HAP-1 (cell line): ENCODE measurements at regions of chr2 and their contacts with region 1.

Region 1: DNA sequence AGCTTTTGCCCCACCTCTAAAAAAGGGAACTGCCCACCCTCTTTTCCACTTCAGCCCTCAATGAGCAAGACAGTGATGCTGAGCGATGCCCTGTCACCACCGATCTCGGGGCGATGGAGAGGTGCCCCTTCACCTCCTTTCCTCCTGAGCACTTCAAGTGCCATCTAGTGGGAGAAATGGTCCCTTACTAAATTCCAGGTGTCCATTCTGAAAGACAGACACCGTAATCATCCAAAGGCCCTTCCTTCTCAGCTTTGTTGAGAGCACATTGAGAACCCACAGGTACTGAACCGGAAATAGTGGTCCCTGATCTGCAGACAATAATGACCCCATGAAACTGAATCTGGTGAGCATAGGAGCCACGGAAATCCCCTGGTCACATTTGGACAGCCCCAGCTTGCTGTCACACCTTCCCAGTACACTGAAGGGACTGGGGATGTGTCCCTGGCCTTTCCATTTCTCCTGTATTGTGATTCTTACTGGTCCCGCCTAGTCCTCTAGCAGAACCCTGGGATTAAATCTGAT is 38.5 kb downstream of the KCTD18 start:
- DNase-seq: peak; percentile 11 to 25
- H3K4me3 ChIP-seq: no peak overlapping the region
- H3K4me1 ChIP-seq: no peaks in the 10 kb centered on the region
- H3K27me3 ChIP-seq: no peaks in the 10 kb centered on the region

Region 2: DNA sequence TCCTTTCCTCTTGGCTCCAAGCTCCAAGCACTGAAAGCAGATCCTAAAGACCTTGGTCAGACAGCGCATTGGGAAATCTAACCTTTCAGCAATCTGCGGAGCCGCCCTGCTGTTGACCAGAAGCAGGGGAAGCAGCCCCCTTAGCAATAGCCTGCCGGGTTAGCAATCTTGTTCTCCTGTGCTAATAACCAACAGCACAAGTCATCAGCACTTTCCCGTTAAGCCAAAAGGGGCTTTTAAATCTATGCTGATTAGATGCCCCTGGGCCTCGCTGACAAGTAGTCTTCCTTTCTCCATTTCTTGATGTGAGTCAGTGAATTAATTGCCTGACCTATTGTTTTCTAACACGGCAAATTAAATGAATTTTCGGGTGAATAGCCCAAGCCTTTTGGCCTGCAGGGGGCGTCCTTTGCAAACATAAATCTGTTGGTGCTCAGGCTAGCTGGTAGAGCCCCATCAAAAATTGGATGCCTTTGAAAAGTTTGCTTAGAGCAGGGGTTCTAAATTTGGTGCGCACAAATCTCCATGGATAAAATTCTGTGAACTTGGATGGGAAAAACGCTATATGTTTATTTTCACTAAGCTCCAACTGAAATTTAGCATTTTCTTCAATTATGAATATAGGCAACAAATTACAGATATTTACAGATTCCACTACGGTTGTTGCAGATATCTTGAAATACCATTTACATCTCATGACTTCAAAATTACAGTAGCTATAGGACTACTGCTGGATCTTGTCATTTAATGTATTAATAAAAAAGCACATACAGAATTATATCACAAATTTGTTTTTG is 491.4 kb before region 1 on chr2:
- in situ Hi-C with region 1: loop called (anchors 5 kb)
- DNase-seq: peak; percentile 36 to 88
- H3K4me3 ChIP-seq: no peak overlapping the region
- H3K4me1 ChIP-seq: no peaks in the 10 kb centered on the region
- H3K27me3 ChIP-seq: no peaks in the 10 kb centered on the region

Region 3: DNA sequence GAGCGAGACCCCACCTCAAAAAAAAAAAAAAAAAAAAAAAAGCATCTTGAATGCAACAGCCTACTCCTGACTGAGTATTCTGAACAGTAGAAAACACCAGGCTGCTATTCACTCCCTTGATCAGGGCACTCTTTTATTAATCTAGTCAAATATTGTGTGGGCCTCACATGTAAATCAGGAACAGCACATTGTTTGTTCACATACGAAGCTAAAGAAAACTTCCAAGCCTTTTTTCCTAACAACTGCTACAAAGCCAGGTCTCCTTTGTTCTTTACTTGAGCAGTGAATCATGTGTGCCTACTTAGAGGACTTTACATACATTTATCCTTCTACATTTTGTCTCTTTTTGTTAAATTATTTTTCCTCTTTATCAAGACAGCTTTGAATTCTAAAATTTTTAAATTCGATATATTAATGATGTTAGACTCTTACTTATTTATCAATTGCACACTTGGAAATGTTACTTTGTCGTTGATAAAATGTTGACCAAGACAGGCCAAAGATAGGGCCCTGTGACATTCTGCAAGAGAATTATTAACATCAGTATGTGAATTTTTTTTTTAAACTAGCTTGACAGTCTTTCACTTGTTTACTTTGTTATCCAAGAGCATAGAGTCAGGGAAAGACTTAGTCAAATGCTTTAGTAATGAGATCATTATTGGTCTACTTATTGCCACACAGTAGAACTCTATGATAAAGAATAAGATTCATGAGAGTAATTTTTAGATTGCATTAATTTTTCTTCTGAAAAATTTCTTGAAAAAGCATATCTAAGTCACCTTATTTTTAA is 151.6 kb before region 1 on chr2:
- in situ Hi-C with region 1: loop called (anchors 10 kb)
- DNase-seq: no peak
- H3K4me3 ChIP-seq: no peak overlapping the region
- H3K4me1 ChIP-seq: peaks cover 11% of the 10 kb centered on the region
- H3K27me3 ChIP-seq: no peaks in the 10 kb centered on the region